ENCODE measurements at regions of chr12 and their contacts with region 1.

Region 1: GRCh38 chr12:79503281-79503680 is 187.5 kb downstream of the PAWR start:
- DNase-seq: no peak
- ATAC-seq: no peak
- H3K4me3 ChIP-seq: no peak overlapping the region
- H3K27ac ChIP-seq: no peak overlapping the region
- H3K4me1 ChIP-seq: no peaks in the 10 kb centered on the region
- H3K27me3 ChIP-seq: no peaks in the 10 kb centered on the region
- CTCF ChIP-seq: no peak
- EP300 ChIP-seq: no peak
- POLR2A ChIP-seq: no peak
- RAD21 ChIP-seq: no peak

Region 2: GRCh38 chr12:79441534-79441933 is 61.7 kb before region 1 on chr12:
- CTCF ChIA-PET with region 1: no interaction called
- POLR2A ChIA-PET with region 1: no interaction called
- RAD21 ChIA-PET with region 1: no interaction called
- SMC1A ChIA-PET with region 1: no interaction called
- in situ Hi-C with region 1: no loop called
- intact Hi-C with region 1: no loop called
- DNase-seq: no peak
- ATAC-seq: no peak
- H3K4me3 ChIP-seq: no peak overlapping the region
- H3K27ac ChIP-seq: no peak overlapping the region
- H3K4me1 ChIP-seq: no peaks in the 10 kb centered on the region
- H3K27me3 ChIP-seq: no peaks in the 10 kb centered on the region
- CTCF ChIP-seq: no peak
- EP300 ChIP-seq: no peak
- POLR2A ChIP-seq: no peak
- RAD21 ChIP-seq: no peak

Region 3: DNA sequence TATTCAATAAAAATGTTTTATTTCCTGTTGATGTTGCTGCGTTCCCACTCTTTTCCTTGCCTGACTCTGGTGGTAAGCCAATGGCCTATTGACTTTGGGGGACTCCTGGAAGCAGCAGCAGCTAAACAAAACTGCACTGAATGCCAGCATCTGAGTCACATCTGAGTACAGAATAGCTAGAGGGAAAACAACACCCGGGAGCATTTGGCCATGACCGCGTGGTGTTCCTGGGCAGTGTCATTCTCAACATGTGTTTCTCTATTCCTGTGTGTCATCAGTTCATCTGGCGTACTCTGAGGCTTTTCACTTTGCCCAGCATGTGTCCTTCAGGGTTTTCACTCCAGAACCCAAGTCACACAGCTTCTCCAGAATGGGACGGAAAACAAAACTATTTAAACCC is 51.3 kb before region 1 on chr12:
- CTCF ChIA-PET with region 1: no interaction called
- POLR2A ChIA-PET with region 1: no interaction called
- RAD21 ChIA-PET with region 1: no interaction called
- SMC1A ChIA-PET with region 1: no interaction called
- in situ Hi-C with region 1: loop called (anchors 5 kb)
- intact Hi-C with region 1: no loop called
- DNase-seq: no peak
- ATAC-seq: no peak
- H3K4me3 ChIP-seq: no peak overlapping the region
- H3K27ac ChIP-seq: no peak overlapping the region
- H3K4me1 ChIP-seq: no peaks in the 10 kb centered on the region
- H3K27me3 ChIP-seq: no peaks in the 10 kb centered on the region
- CTCF ChIP-seq: no peak
- EP300 ChIP-seq: no peak
- POLR2A ChIP-seq: no peak
- RAD21 ChIP-seq: no peak

Region 4: GRCh38 chr12:79482323-79482722 is 21.0 kb before region 1 on chr12:
- CTCF ChIA-PET with region 1: no interaction called
- POLR2A ChIA-PET with region 1: no interaction called
- RAD21 ChIA-PET with region 1: no interaction called
- SMC1A ChIA-PET with region 1: no interaction called
- in situ Hi-C with region 1: no loop called
- intact Hi-C with region 1: no loop called
- DNase-seq: no peak
- ATAC-seq: no peak
- H3K4me3 ChIP-seq: no peak overlapping the region
- H3K27ac ChIP-seq: no peak overlapping the region
- H3K4me1 ChIP-seq: no peaks in the 10 kb centered on the region
- H3K27me3 ChIP-seq: no peaks in the 10 kb centered on the region
- CTCF ChIP-seq: no peak
- EP300 ChIP-seq: no peak
- POLR2A ChIP-seq: no peak
- RAD21 ChIP-seq: no peak

Region 5: GRCh38 chr12:79601909-79602308 is 98.6 kb after region 1 on chr12:
- CTCF ChIA-PET with region 1: no interaction called
- POLR2A ChIA-PET with region 1: no interaction called
- RAD21 ChIA-PET with region 1: no interaction called
- SMC1A ChIA-PET with region 1: no interaction called
- in situ Hi-C with region 1: no loop called
- intact Hi-C with region 1: no loop called
- DNase-seq: no peak
- ATAC-seq: no peak
- H3K4me3 ChIP-seq: no peak overlapping the region
- H3K27ac ChIP-seq: no peak overlapping the region
- H3K4me1 ChIP-seq: no peaks in the 10 kb centered on the region
- H3K27me3 ChIP-seq: no peaks in the 10 kb centered on the region
- CTCF ChIP-seq: no peak
- EP300 ChIP-seq: no peak
- POLR2A ChIP-seq: no peak
- RAD21 ChIP-seq: no peak

Measured in GM12878 (cell line).